Ascending aorta (tissue), 2 donors: ENCODE measurements at regions of chr3 and their contacts with region 1.

Region 1: DNA sequence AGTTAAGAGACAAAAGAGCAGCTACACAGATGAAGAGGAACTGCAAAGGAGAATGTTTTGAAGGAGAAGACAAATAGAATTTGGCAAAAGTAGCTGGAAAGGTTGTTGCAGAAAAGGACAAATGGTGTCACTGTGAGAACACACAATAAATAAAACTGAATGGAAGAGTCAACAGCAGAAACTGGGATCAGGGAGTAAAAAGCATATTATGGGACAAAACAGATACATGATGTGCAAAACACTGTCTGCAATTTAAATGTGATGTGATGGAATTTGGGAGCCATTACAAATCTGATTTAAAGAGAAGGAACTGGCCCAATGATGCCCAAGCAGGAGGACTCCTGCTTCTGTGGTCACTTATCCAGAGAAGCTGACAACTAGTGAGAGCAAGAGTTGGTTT is 46.1 kb downstream of the CD47 start:
- DNase-seq: no peak
- H3K4me3 ChIP-seq: no peak overlapping the region
- H3K27ac ChIP-seq: no peak overlapping the region
- H3K4me1 ChIP-seq: no peaks in the 10 kb centered on the region
- H3K27me3 ChIP-seq: no peaks in the 10 kb centered on the region
- CTCF ChIP-seq: no peak

Region 2: GRCh38 chr3:107816107-107816506 is 228.6 kb before region 1 on chr3:
- intact Hi-C with region 1: no loop called
- DNase-seq: no peak
- H3K4me3 ChIP-seq: no peak overlapping the region
- H3K27ac ChIP-seq: no peak overlapping the region
- H3K4me1 ChIP-seq: peaks cover 0 to 4% of the 10 kb centered on the region in 2 donors
- H3K27me3 ChIP-seq: no peaks in the 10 kb centered on the region
- CTCF ChIP-seq: no peak

Region 3: DNA sequence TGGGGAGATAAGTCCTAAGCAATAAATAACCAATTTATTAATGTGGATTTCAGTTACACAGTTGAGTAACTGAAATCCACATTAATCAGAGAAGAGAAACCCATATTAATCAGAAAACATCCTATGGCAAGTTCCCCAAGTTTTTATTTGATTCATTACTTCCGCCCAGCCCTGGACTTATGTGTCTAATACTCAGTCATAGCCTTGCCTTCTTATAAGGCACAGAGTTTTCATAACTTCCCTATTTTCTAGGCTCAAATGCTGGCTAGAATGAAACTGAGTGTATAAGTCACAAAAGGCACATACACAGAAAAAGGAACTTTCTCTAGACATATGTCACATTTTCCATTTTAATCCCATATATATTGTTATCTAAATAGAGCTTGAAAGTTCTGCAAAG is 17.4 kb after region 1 on chr3:
- intact Hi-C with region 1: loop called (anchors 2 kb)
- DNase-seq: no peak
- H3K4me3 ChIP-seq: no peak overlapping the region
- H3K27ac ChIP-seq: no peak overlapping the region
- H3K4me1 ChIP-seq: peaks cover 0 to under 1% of the 10 kb centered on the region in 2 donors
- H3K27me3 ChIP-seq: no peaks in the 10 kb centered on the region
- CTCF ChIP-seq: no peak